ENCODE measurements at regions of chr22 and their contacts with region 1.

Region 1: GRCh38 chr22:21834869-21835268 is 32.6 kb downstream of the MAPK1 start:
- DNase-seq: peak; percentile 82
- ATAC-seq: peak; percentile 91
- H3K4me3 ChIP-seq: peak overlapping the region in 1 of 5 experiments; percentile 9
- H3K4me3 Mint-ChIP-seq: peak overlapping the region; percentile 78
- H3K27ac ChIP-seq: peak overlapping the region; percentile 67 to 91
- H3K27ac Mint-ChIP-seq: peak overlapping the region; percentile 89
- H3K4me1 ChIP-seq: peaks cover 45 to 51% of the 10 kb centered on the region in 2 donors
- H3K4me1 Mint-ChIP-seq: peaks cover 71% of the 10 kb centered on the region
- H3K27me3 ChIP-seq: no peaks in the 10 kb centered on the region
- H3K27me3 Mint-ChIP-seq: no peaks in the 10 kb centered on the region
- CTCF ChIP-seq: no peak

Region 2: DNA sequence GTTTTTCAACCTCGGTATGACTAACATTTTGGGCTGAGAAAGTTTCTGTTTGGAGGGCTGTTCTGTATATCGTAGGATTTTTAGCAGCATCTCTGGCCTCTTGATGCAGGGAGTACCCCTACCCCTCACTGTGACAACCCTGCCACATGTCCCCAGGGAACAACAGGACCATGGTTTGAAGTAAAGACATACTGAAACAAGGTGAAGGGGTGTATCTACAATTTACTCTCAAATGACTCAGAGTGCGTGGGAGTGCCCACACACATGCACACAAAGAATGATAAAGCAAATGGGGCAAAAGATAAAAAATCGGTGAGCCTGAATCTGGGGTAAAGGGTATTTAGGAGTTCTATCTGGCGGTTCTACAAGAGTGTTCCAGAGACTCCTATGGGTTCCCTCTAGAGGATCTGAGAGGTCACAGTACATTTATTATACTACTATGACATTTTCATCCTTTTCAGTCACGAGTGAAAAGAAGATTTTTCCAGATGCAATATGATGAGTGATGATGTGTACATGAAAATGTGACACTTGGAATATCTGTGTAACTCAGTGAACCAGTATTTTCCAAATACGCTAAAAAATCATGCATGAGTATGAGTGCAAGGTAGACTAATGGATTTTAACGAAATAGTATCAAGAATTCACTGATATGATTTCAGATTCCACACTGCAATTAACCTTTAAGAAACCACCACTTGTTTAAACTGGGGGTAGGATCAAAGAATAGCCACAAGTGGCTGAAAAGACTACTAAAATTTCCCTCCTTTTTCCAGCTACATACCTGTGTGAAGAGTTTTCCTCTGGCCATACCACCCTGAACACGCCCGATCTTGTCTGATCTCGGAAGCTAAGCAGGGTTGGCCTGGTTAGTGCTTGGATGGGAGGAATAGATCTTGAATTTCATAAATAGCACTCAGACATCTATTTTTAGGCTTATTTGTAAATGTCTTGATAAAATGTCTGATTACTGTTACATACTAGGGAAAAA is 42.9 kb before region 1 on chr22:
- CTCF ChIA-PET with region 1: no interaction called
- POLR2A ChIA-PET with region 1: interaction called, 4 read pairs
- intact Hi-C with region 1: loop called (anchors 2 kb)
- DNase-seq: no peak
- ATAC-seq: peak; percentile 28
- H3K4me3 ChIP-seq: no peak overlapping the region
- H3K4me3 Mint-ChIP-seq: no peak overlapping the region
- H3K27ac ChIP-seq: no peak overlapping the region
- H3K27ac Mint-ChIP-seq: peak overlapping the region; percentile 33
- H3K4me1 ChIP-seq: no peaks in the 10 kb centered on the region
- H3K4me1 Mint-ChIP-seq: peaks cover 4% of the 10 kb centered on the region
- H3K27me3 ChIP-seq: no peaks in the 10 kb centered on the region
- H3K27me3 Mint-ChIP-seq: no peaks in the 10 kb centered on the region
- CTCF ChIP-seq: no peak

Region 3: GRCh38 chr22:21802056-21802455 is 32.8 kb before region 1 on chr22:
- CTCF ChIA-PET with region 1: no interaction called
- POLR2A ChIA-PET with region 1: no interaction called
- intact Hi-C with region 1: no loop called
- DNase-seq: no peak
- ATAC-seq: no peak
- H3K4me3 ChIP-seq: no peak overlapping the region
- H3K4me3 Mint-ChIP-seq: no peak overlapping the region
- H3K27ac ChIP-seq: no peak overlapping the region
- H3K27ac Mint-ChIP-seq: no peak overlapping the region
- H3K4me1 ChIP-seq: no peaks in the 10 kb centered on the region
- H3K4me1 Mint-ChIP-seq: no peaks in the 10 kb centered on the region
- H3K27me3 ChIP-seq: no peaks in the 10 kb centered on the region
- H3K27me3 Mint-ChIP-seq: no peaks in the 10 kb centered on the region
- CTCF ChIP-seq: no peak

Region 4: GRCh38 chr22:21867528-21868266 is 32.8 kb after region 1 on chr22 and contains the start of gene MAPK1:
- CTCF ChIA-PET with region 1: interaction called, 4 read pairs
- POLR2A ChIA-PET with region 1: interaction called, 4 read pairs
- intact Hi-C with region 1: loop called (anchors 2 kb)
- DNase-seq: peak; percentile 98
- ATAC-seq: peak; percentile 90
- H3K4me3 ChIP-seq: peak within 1 kb of the TSS; percentile 64 to 93 (median 91)
- H3K4me3 Mint-ChIP-seq: peak within 1 kb of the TSS; percentile 94
- H3K27ac ChIP-seq: peak within 1 kb of the TSS; percentile 93 to 100
- H3K27ac Mint-ChIP-seq: peak within 1 kb of the TSS; percentile 93
- H3K4me1 ChIP-seq: peaks cover 39 to 40% of the 10 kb centered on the region in 2 donors
- H3K4me1 Mint-ChIP-seq: peaks cover 45% of the 10 kb centered on the region
- H3K27me3 ChIP-seq: no peaks in the 10 kb centered on the region
- H3K27me3 Mint-ChIP-seq: no peaks in the 10 kb centered on the region
- CTCF ChIP-seq: peak; percentile 39
- total RNA-seq, gene MAPK1: 145 and 155 TPM in 2 replicates

Region 5: GRCh38 chr22:21963790-21964211 is 128.9 kb after region 1 on chr22:
- CTCF ChIA-PET with region 1: no interaction called
- POLR2A ChIA-PET with region 1: no interaction called
- intact Hi-C with region 1: no loop called
- DNase-seq: no peak
- ATAC-seq: no peak
- H3K4me3 ChIP-seq: no peak overlapping the region
- H3K4me3 Mint-ChIP-seq: no peak overlapping the region
- H3K27ac ChIP-seq: no peak overlapping the region
- H3K27ac Mint-ChIP-seq: no peak overlapping the region
- H3K4me1 ChIP-seq: no peaks in the 10 kb centered on the region
- H3K4me1 Mint-ChIP-seq: no peaks in the 10 kb centered on the region
- H3K27me3 ChIP-seq: no peaks in the 10 kb centered on the region
- H3K27me3 Mint-ChIP-seq: no peaks in the 10 kb centered on the region
- CTCF ChIP-seq: no peak

Measured in B cell (primary cell).